Esophagus squamous epithelium (tissue), 5 donors: ENCODE measurements at regions of chr10 and their contacts with region 1.

Region 1: GRCh38 chr10:70461215-70461986 is 17.2 kb upstream of the PALD1 start:
- DNase-seq: no peak
- H3K4me3 ChIP-seq: no peak overlapping the region
- H3K27ac ChIP-seq: no peak overlapping the region
- H3K4me1 ChIP-seq: peaks cover 25 to 47% (median 32%) of the 10 kb centered on the region in 3 donors
- H3K27me3 ChIP-seq: peaks cover 0 to 38% (median 0%) of the 10 kb centered on the region in 4 donors
- CTCF ChIP-seq: peak; percentile 70 to 85 (median 78)
- POLR2A ChIP-seq: no peak

Region 2: DNA sequence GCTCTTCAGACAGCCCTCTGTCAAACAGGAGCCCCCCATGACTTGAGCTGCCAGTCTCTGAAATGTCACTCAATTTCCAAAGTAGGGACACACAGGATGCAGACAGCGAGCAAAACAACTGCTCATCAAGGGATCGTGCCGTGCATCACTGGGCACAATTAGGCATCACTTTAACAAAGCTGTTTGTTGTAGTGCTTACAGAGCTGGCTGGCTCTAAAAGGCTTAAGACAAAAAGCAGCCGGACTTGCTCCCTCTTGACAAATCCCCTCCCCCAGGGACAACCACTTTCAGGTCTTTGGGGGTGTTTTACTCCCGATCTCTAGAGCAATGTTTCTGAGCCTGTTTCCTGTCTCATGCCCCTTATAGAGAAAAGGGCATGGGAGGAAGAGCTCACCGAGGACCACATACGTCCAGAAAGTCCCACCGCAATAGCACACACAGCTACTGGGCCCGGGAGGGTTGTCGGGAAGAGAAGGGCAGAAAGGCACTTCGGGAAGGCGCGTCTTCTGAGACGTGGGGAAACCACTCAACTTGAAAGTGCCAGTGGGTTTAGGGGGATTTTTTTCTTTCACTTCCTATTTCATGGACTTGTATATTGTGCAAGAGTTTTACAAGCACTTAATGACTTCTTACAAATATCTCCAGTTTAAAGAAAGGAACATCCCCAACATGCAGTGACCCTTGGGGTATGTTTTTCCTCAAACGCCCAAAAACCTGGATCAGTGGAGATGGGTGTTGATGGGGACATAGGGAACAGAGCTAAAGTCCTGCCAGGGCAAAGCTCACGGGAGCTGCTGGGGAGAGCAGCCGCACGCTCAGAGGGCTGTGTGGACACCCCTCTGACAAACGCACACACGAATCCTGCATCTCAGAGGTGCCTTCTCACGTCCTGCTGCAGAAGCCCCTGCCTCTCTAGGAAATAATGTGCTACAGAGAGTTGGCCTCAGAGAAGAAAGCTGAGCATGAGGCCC is 106.1 kb before region 1 on chr10:
- intact Hi-C with region 1: no loop called
- DNase-seq: no peak
- H3K4me3 ChIP-seq: peak overlapping the region in 1 of 4 donors; percentile 38
- H3K27ac ChIP-seq: peak overlapping the region in 2 of 4 donors; percentile 3 to 54
- H3K4me1 ChIP-seq: peaks cover 0 to 24% (median 12%) of the 10 kb centered on the region in 3 donors
- H3K27me3 ChIP-seq: no peaks in the 10 kb centered on the region
- CTCF ChIP-seq: no peak
- POLR2A ChIP-seq: no peak

Region 3: GRCh38 chr10:70391654-70392053 is 69.7 kb before region 1 on chr10:
- intact Hi-C with region 1: no loop called
- DNase-seq: no peak
- H3K4me3 ChIP-seq: no peak overlapping the region
- H3K27ac ChIP-seq: no peak overlapping the region
- H3K4me1 ChIP-seq: peaks cover 0 to 22% (median 0%) of the 10 kb centered on the region in 3 donors
- H3K27me3 ChIP-seq: no peaks in the 10 kb centered on the region
- CTCF ChIP-seq: no peak
- POLR2A ChIP-seq: no peak

Region 4: DNA sequence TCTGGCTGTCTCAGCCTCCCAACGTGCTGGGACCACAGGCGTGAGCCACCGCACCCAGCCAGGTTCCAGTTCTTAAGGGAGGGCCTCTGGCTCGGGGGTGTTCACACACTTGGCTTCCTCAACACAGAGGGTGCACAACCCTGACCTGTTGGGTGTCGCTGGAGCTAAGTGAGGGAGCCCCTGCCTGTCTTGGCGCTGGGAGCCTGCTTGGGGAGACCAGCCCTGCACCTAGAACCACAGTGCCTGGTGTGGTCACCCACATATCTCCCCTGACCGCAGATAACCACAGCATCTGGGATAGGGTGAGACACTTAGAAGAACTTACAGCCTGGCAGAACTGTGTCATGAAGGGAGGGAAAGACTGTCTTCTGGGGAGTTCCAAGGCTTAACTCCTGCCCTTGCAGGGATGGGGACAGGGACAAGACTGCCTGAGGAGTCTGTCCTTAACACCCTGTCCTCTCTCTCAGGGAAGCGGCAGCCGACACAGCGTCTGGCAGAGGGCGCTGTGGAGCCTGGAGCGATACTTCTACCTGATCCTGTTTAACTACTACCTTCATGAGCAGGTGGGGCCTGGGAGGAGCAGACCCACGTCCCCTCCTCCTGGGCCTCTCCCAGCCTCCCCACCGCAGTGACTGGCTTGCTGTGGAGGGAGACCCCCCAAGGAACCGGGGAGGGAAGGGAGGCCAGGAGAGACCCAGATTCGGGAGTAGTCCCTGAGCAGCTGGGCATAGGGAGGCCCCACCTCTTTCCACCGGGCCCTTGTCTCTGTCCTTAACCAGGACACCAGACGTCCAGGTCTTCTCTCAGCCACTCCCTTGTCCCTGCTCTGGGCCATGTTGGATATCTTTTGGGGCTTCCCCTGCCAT is 76.2 kb after region 1 on chr10:
- intact Hi-C with region 1: loop called (anchors 5 kb)
- DNase-seq: no peak
- H3K4me3 ChIP-seq: no peak overlapping the region
- H3K27ac ChIP-seq: no peak overlapping the region
- H3K4me1 ChIP-seq: no peaks in the 10 kb centered on the region
- H3K27me3 ChIP-seq: no peaks in the 10 kb centered on the region
- CTCF ChIP-seq: peak in 5 of 6 experiments; percentile 20 to 59 (median 28)
- POLR2A ChIP-seq: no peak